WTC11 (cell line): ENCODE measurements at regions of chr6 and their contacts with region 1.

Region 1: GRCh38 chr6:33446339-33446738 is 8.0 kb upstream of the ZBTB9 start:
- DNase-seq: no peak
- ATAC-seq: no peak
- H3K4me3 Mint-ChIP-seq: no peak overlapping the region
- H3K27ac Mint-ChIP-seq: no peak overlapping the region
- H3K4me1 Mint-ChIP-seq: no peaks in the 10 kb centered on the region
- H3K27me3 Mint-ChIP-seq: no peaks in the 10 kb centered on the region
- CTCF ChIP-seq: no peak

Region 2: DNA sequence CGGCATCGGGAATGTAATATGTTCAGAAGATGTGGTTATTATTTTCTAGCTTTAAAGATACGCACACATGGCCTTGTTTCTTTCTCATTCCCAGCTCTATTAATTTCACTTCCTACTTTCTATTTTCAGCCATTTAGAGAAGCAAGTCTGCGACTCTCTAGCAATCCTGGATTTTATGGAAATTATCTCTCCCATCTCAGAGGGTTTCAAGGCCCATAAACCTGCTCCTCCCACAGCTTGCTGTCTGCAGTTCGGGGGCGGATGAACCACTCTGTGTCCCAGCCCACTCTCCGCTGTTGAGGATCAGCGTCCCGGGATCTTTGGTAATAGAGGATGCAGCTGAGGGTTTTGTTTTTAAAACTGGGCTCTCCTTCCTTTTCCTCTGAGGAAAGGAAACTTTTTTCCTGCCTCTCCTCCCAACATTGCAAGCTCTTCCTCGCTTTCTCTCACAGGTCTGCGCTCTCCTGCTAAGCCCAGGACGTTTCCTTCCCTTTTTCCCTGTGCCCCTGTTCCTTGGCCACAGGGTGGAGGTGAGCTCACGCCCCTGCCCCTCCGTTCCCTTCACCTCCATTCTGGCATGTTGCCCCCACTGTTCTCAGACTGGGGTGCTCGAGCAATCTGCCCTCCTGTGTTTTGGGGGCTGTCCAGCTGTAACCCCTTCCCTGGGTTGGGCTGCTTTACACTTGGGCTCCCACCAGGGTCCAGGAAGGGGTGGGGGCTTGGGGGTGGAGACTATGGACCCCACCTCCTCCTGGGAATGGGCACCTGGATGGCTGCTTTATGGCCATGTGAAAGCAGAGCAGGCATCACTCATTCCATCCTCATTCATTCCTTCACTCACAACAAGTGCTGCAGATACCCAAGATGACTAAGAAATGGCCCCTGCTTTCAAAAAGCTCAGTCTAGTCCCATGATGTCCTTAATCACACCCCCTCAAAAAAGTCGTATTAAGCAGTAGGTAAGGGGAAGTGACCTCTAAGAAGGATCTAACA is 62.9 kb after region 1 on chr6:
- CTCF ChIA-PET with region 1: no interaction called
- POLR2A ChIA-PET with region 1: no interaction called
- DNase-seq: peak; percentile 28
- ATAC-seq: peak; percentile 80
- H3K4me3 Mint-ChIP-seq: peak overlapping the region; percentile 52
- H3K27ac Mint-ChIP-seq: peak overlapping the region; percentile 64
- H3K4me1 Mint-ChIP-seq: peaks cover 25% of the 10 kb centered on the region
- H3K27me3 Mint-ChIP-seq: peaks cover 13% of the 10 kb centered on the region
- CTCF ChIP-seq: no peak

Region 3: GRCh38 chr6:33642897-33643296 is 196.6 kb after region 1 on chr6:
- CTCF ChIA-PET with region 1: no interaction called
- POLR2A ChIA-PET with region 1: interaction called, 11 read pairs
- DNase-seq: no peak
- ATAC-seq: no peak
- H3K4me3 Mint-ChIP-seq: no peak overlapping the region
- H3K27ac Mint-ChIP-seq: no peak overlapping the region
- H3K4me1 Mint-ChIP-seq: peaks cover 8% of the 10 kb centered on the region; the same call in 1 of the 2 replicates
- H3K27me3 Mint-ChIP-seq: no peaks in the 10 kb centered on the region
- CTCF ChIP-seq: no peak